ENCODE measurements at regions of chr1 and their contacts with region 1.

Region 1: DNA sequence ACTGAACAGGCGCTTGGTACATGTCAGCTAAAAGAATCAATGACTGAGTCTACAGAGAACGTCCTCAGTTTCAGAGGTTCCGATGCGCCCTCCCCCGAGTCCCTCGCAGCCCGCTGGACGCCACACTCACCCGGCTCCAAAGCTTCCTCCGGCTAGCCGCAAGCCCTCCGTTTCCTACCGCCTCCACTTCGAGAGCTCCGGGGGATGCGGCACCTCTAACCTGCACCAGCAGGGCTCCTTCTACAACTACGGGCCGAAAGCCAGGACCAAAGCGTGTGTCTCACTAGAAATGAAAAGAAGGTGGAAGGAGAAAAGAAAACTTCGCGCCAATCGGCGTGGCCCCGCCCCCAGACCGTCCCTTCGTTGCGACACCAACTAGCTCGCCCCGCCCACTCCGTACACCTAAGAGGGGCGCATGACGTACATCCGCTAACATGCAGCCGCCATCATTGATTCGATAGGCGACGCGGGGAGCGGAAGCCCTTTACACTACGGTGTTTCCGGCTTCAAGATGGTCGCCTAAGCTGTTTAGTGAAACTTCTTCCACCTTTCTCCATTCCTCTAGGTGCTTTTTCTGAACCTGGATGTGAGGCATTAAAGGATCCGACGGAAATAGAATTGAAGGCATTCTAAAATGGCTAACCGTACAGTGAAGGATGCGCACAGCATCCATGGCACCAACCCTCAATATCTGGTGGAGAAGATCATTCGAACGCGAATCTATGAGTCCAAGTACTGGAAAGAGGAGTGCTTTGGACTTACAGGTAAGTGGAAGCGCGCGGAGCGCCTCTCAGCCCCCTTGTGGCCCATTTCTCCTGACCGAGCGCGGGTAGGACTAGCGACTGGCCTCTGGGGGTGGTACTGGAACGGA is at the starts of genes ORC1 and PRPF38A:
- DNase-seq: peak; percentile 94 to 97 (median 96)
- H3K4me3 ChIP-seq: peak within 1 kb of the TSS; percentile 98 to 99 (median 98)
- H3K4me3 Mint-ChIP-seq: peak within 1 kb of the TSS; percentile 100
- H3K27ac ChIP-seq: peak within 1 kb of the TSS; percentile 90 to 99
- H3K27ac Mint-ChIP-seq: peak within 1 kb of the TSS; percentile 98 to 99 (median 98)
- H3K4me1 ChIP-seq: peaks cover 27 to 32% of the 10 kb centered on the region in 2 donors
- H3K4me1 Mint-ChIP-seq: peaks cover 30% of the 10 kb centered on the region
- H3K27me3 ChIP-seq: no peaks in the 10 kb centered on the region
- H3K27me3 Mint-ChIP-seq: peaks cover 0 to 1% (median 0%) of the 10 kb centered on the region in 3 donors
- CTCF ChIP-seq: peak; percentile 50
- polyA plus RNA-seq, gene ORC1: 0.12 to 0.27 TPM in 2 of 3 donors, not detected in the other
- polyA plus RNA-seq, gene PRPF38A: 19.7 to 30.9 (median 25.2) TPM

Region 2: DNA sequence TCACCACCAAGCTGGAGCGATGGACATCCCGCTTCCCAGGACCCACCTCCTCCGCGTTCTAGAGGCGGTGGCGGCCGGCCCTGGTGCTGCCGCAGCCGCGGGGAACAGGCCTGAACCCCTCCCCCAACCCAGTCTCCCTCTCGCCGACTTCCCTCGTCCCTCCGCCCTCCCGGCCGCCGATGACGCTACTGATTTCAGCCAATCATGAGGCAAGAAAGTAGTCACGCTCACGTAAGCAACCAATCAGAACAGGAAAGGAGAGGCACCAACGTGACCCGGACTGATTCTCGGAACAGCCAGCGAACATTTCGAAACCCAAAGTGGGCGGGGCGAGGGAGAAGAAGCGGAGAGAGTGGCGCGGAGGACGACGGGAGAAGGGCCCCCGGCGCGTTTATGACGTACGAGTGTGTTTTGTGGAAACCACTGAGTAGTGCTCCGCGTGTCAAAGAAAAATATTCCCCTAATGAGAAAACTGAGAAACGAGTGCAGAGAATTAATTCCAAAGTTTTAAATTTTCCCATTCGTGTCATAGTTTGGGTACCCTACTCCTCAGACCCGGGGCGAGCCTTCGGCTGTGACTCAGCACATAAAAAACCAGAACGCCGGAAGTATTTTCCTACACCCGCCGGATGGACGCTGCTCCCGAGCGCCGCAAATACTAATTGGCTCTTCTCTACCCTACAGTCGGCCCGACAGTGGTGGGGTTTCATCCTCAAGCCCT is 525.6 kb before region 1 on chr1 and contains the start of gene NRDC:
- intact Hi-C with region 1: loop called (anchors 10 kb)
- DNase-seq: peak; percentile 99 to 100 (median 100)
- H3K4me3 ChIP-seq: peak within 1 kb of the TSS; percentile 95 to 100 (median 97)
- H3K4me3 Mint-ChIP-seq: no peak within 1 kb of the TSS
- H3K27ac ChIP-seq: peak within 1 kb of the TSS; percentile 96 to 99
- H3K27ac Mint-ChIP-seq: no peak within 1 kb of the TSS
- H3K4me1 ChIP-seq: peaks cover 29 to 41% of the 10 kb centered on the region in 2 donors
- H3K4me1 Mint-ChIP-seq: peaks cover 26% of the 10 kb centered on the region
- H3K27me3 ChIP-seq: no peaks in the 10 kb centered on the region
- H3K27me3 Mint-ChIP-seq: peaks cover 8 to 13% (median 12%) of the 10 kb centered on the region in 3 donors
- CTCF ChIP-seq: no peak
- polyA plus RNA-seq, gene NRDC: 66.8 to 92.0 (median 74.3) TPM

Region 3: GRCh38 chr1:52056163-52056936 is 348.0 kb before region 1 on chr1 and contains the start of gene BTF3L4:
- intact Hi-C with region 1: loop called in 1 of 2 experiments (anchors 10 kb)
- DNase-seq: peak; percentile 69 to 79 (median 75)
- H3K4me3 ChIP-seq: peak within 1 kb of the TSS; percentile 89 to 94 (median 92)
- H3K4me3 Mint-ChIP-seq: peak within 1 kb of the TSS; percentile 98 to 100
- H3K27ac ChIP-seq: peak within 1 kb of the TSS; percentile 87 to 92
- H3K27ac Mint-ChIP-seq: peak within 1 kb of the TSS; percentile 87 to 98 (median 96)
- H3K4me1 ChIP-seq: peaks cover 35 to 45% of the 10 kb centered on the region in 2 donors
- H3K4me1 Mint-ChIP-seq: peaks cover 44% of the 10 kb centered on the region
- H3K27me3 ChIP-seq: no peaks in the 10 kb centered on the region
- H3K27me3 Mint-ChIP-seq: no peaks in the 10 kb centered on the region
- CTCF ChIP-seq: no peak
- polyA plus RNA-seq, gene BTF3L4: 27.0 to 116 (median 108) TPM

Region 4: GRCh38 chr1:52365746-52366516 is 38.4 kb before region 1 on chr1 and contains the start of gene CC2D1B:
- intact Hi-C with region 1: loop called (anchors 1 to 2 kb)
- DNase-seq: peak; percentile 95 to 98 (median 97)
- H3K4me3 ChIP-seq: peak within 1 kb of the TSS; percentile 80 to 95 (median 90)
- H3K4me3 Mint-ChIP-seq: peak within 1 kb of the TSS; percentile 96 to 98
- H3K27ac ChIP-seq: peak within 1 kb of the TSS; percentile 73 to 93
- H3K27ac Mint-ChIP-seq: peak within 1 kb of the TSS; percentile 94 to 97 (median 97)
- H3K4me1 ChIP-seq: peaks cover 23 to 30% of the 10 kb centered on the region in 2 donors
- H3K4me1 Mint-ChIP-seq: peaks cover 25% of the 10 kb centered on the region
- H3K27me3 ChIP-seq: peaks cover 0 to 16% of the 10 kb centered on the region in 2 donors
- H3K27me3 Mint-ChIP-seq: peaks cover 11 to 20% (median 12%) of the 10 kb centered on the region in 3 donors
- CTCF ChIP-seq: peak; percentile 15
- polyA plus RNA-seq, gene CC2D1B: 1.7 to 17.5 (median 2.4) TPM

Region 5: GRCh38 chr1:52416811-52417210 is 12.5 kb after region 1 on chr1:
- intact Hi-C with region 1: no loop called
- DNase-seq: no peak
- H3K4me3 ChIP-seq: no peak overlapping the region
- H3K4me3 Mint-ChIP-seq: no peak overlapping the region
- H3K27ac ChIP-seq: no peak overlapping the region
- H3K27ac Mint-ChIP-seq: no peak overlapping the region
- H3K4me1 ChIP-seq: no peaks in the 10 kb centered on the region
- H3K4me1 Mint-ChIP-seq: no peaks in the 10 kb centered on the region
- H3K27me3 ChIP-seq: no peaks in the 10 kb centered on the region
- H3K27me3 Mint-ChIP-seq: no peaks in the 10 kb centered on the region
- CTCF ChIP-seq: no peak

Region 6: GRCh38 chr1:52473039-52473438 is 68.7 kb after region 1 on chr1:
- intact Hi-C with region 1: no loop called
- DNase-seq: no peak
- H3K4me3 ChIP-seq: no peak overlapping the region
- H3K4me3 Mint-ChIP-seq: no peak overlapping the region
- H3K27ac ChIP-seq: no peak overlapping the region
- H3K27ac Mint-ChIP-seq: no peak overlapping the region
- H3K4me1 ChIP-seq: no peaks in the 10 kb centered on the region
- H3K4me1 Mint-ChIP-seq: no peaks in the 10 kb centered on the region
- H3K27me3 ChIP-seq: no peaks in the 10 kb centered on the region
- H3K27me3 Mint-ChIP-seq: peaks cover 0 to 5% (median 0%) of the 10 kb centered on the region in 3 donors
- CTCF ChIP-seq: no peak

Region 7: GRCh38 chr1:52534928-52535764 is 130.8 kb after region 1 on chr1:
- intact Hi-C with region 1: no loop called
- DNase-seq: peak in 1 of 3 donors; percentile 32
- H3K4me3 ChIP-seq: no peak overlapping the region
- H3K4me3 Mint-ChIP-seq: no peak overlapping the region
- H3K27ac ChIP-seq: no peak overlapping the region
- H3K27ac Mint-ChIP-seq: peak overlapping the region in 2 of 7 donors; percentile 35 to 60
- H3K4me1 ChIP-seq: peaks cover 38 to 49% of the 10 kb centered on the region in 2 donors
- H3K4me1 Mint-ChIP-seq: peaks cover 51% of the 10 kb centered on the region
- H3K27me3 ChIP-seq: no peaks in the 10 kb centered on the region
- H3K27me3 Mint-ChIP-seq: no peaks in the 10 kb centered on the region
- CTCF ChIP-seq: no peak

Region 8: GRCh38 chr1:52552505-52553361 is 148.4 kb after region 1 on chr1 and contains the start of gene TUT4:
- intact Hi-C with region 1: loop called in 1 of 2 experiments (anchors 10 kb)
- DNase-seq: peak; percentile 37 to 57 (median 53)
- H3K4me3 ChIP-seq: peak within 1 kb of the TSS; percentile 76 to 93 (median 77)
- H3K4me3 Mint-ChIP-seq: peak within 1 kb of the TSS in 1 of 2 donors; percentile 80
- H3K27ac ChIP-seq: peak within 1 kb of the TSS in 1 of 2 donors; percentile 79
- H3K27ac Mint-ChIP-seq: peak within 1 kb of the TSS in 5 of 7 donors; percentile 60 to 85 (median 68)
- H3K4me1 ChIP-seq: peaks cover 16 to 23% of the 10 kb centered on the region in 2 donors
- H3K4me1 Mint-ChIP-seq: peaks cover 19% of the 10 kb centered on the region
- H3K27me3 ChIP-seq: peaks cover 0 to 6% of the 10 kb centered on the region in 2 donors
- H3K27me3 Mint-ChIP-seq: peaks cover 2 to 6% (median 5%) of the 10 kb centered on the region in 3 donors
- CTCF ChIP-seq: no peak
- polyA plus RNA-seq, gene TUT4: 4.3 to 24.2 (median 7.6) TPM

Region 9: GRCh38 chr1:52590275-52590674 is 185.9 kb after region 1 on chr1:
- intact Hi-C with region 1: no loop called
- DNase-seq: no peak
- H3K4me3 ChIP-seq: no peak overlapping the region
- H3K4me3 Mint-ChIP-seq: no peak overlapping the region
- H3K27ac ChIP-seq: no peak overlapping the region
- H3K27ac Mint-ChIP-seq: peak overlapping the region in 2 of 7 donors; percentile 25 to 46
- H3K4me1 ChIP-seq: peaks cover 24 to 25% of the 10 kb centered on the region in 2 donors
- H3K4me1 Mint-ChIP-seq: peaks cover 36% of the 10 kb centered on the region
- H3K27me3 ChIP-seq: peaks cover 0 to 2% of the 10 kb centered on the region in 2 donors
- H3K27me3 Mint-ChIP-seq: peaks cover 1 to 5% (median 2%) of the 10 kb centered on the region in 3 donors
- CTCF ChIP-seq: no peak

Region 10: GRCh38 chr1:52697795-52698674 is 293.7 kb after region 1 on chr1 and contains the start of gene COA7:
- intact Hi-C with region 1: loop called (anchors 5 to 10 kb)
- DNase-seq: peak; percentile 63 to 68 (median 67)
- H3K4me3 ChIP-seq: peak within 1 kb of the TSS; percentile 67 to 97 (median 92)
- H3K4me3 Mint-ChIP-seq: peak within 1 kb of the TSS; percentile 96
- H3K27ac ChIP-seq: peak within 1 kb of the TSS; percentile 71 to 88
- H3K27ac Mint-ChIP-seq: peak within 1 kb of the TSS; percentile 87 to 96 (median 92)
- H3K4me1 ChIP-seq: peaks cover 19 to 29% of the 10 kb centered on the region in 2 donors
- H3K4me1 Mint-ChIP-seq: peaks cover 34% of the 10 kb centered on the region
- H3K27me3 ChIP-seq: no peaks in the 10 kb centered on the region
- H3K27me3 Mint-ChIP-seq: peaks cover 0 to 3% (median 1%) of the 10 kb centered on the region in 3 donors
- CTCF ChIP-seq: no peak
- polyA plus RNA-seq, gene COA7: 4.8 to 8.5 (median 6.2) TPM

Region 11: GRCh38 chr1:52702886-52703787 is 298.8 kb after region 1 on chr1:
- intact Hi-C with region 1: loop called (anchors 5 to 10 kb)
- DNase-seq: peak; percentile 94 to 96 (median 95)
- H3K4me3 ChIP-seq: peak overlapping the region; percentile 3 to 69 (median 45)
- H3K4me3 Mint-ChIP-seq: peak overlapping the region; percentile 87 to 93
- H3K27ac ChIP-seq: peak overlapping the region; percentile 87 to 97
- H3K27ac Mint-ChIP-seq: peak overlapping the region; percentile 97 to 99 (median 99)
- H3K4me1 ChIP-seq: peaks cover 44 to 52% of the 10 kb centered on the region in 2 donors
- H3K4me1 Mint-ChIP-seq: peaks cover 45% of the 10 kb centered on the region
- H3K27me3 ChIP-seq: no peaks in the 10 kb centered on the region
- H3K27me3 Mint-ChIP-seq: peaks cover 0 to 7% (median 1%) of the 10 kb centered on the region in 3 donors
- CTCF ChIP-seq: no peak